Tibial artery (tissue), 4 donors: ENCODE measurements at regions of chr11 and their contacts with region 1.

Region 1: GRCh38 chr11:121321614-121322243 is 29.2 kb downstream of the SC5D start:
- DNase-seq: peak in 1 of 2 donors; percentile 29
- H3K4me3 ChIP-seq: no peak overlapping the region
- H3K27ac ChIP-seq: no peak overlapping the region
- H3K4me1 ChIP-seq: no peaks in the 10 kb centered on the region
- H3K27me3 ChIP-seq: no peaks in the 10 kb centered on the region
- CTCF ChIP-seq: peak; percentile 46 to 49

Region 2: GRCh38 chr11:121004206-121004840 is 317.4 kb before region 1 on chr11:
- intact Hi-C with region 1: no loop called
- DNase-seq: no peak
- H3K4me3 ChIP-seq: no peak overlapping the region
- H3K27ac ChIP-seq: no peak overlapping the region
- H3K4me1 ChIP-seq: no peaks in the 10 kb centered on the region
- H3K27me3 ChIP-seq: peaks cover 0 to 10% of the 10 kb centered on the region in 2 donors
- CTCF ChIP-seq: no peak

Region 3: GRCh38 chr11:121112498-121113455 is 209.0 kb before region 1 on chr11:
- intact Hi-C with region 1: no loop called
- DNase-seq: peak; percentile 60 to 70
- H3K4me3 ChIP-seq: no peak overlapping the region
- H3K27ac ChIP-seq: no peak overlapping the region
- H3K4me1 ChIP-seq: no peaks in the 10 kb centered on the region
- H3K27me3 ChIP-seq: no peaks in the 10 kb centered on the region
- CTCF ChIP-seq: peak; percentile 39

Region 4: DNA sequence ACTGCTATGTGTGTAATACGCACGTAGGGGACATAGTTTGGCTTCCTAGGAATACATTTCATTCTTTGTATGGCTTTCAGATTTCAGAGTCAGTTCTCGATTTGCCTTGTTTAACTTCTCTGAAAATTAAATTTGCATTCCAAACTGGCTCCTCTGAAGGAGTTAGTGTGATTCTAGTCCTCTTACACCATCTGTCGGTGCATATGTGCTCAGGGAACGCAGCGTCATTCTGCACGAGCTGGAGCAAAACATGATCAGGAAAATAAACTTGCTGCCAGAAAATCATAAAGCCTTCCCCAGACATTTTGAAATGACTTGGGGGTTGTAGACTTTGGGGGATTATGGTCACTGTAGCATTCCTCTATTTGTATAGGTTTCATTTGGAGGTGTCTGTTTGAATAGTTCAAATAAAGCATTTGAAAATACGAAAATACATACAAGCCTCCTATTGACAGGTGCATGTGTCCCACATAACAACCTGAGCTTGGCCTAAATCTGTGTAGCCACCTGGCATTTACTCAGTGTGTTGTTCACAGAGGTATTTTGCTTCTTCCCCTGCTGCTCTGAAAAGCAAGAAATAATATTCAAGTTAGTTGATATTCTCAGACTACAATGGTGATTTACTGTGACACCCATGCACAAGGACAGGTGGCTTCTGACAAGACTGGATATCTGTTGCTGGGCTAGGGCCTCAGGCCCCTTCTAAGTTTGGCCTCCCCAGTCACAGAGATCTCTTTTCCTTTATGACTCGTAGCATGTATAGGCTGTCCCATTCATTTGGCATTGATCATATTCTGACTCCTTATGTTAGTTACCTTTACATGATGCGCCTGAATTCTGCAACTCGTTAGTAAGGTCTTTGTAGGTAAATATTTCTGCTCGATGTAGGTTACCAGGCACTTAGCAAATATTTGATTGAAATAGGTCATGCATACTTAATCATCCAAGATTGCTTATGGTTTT is 212.7 kb after region 1 on chr11:
- intact Hi-C with region 1: loop called (anchors 5 kb)
- DNase-seq: no peak
- H3K4me3 ChIP-seq: no peak overlapping the region
- H3K27ac ChIP-seq: no peak overlapping the region
- H3K4me1 ChIP-seq: peaks cover 0 to 5% (median 0%) of the 10 kb centered on the region in 4 donors
- H3K27me3 ChIP-seq: no peaks in the 10 kb centered on the region
- CTCF ChIP-seq: peak; percentile 66 to 78